HCT116 (cell line): ENCODE measurements at regions of chr15 and their contacts with region 1.

Region 1: DNA sequence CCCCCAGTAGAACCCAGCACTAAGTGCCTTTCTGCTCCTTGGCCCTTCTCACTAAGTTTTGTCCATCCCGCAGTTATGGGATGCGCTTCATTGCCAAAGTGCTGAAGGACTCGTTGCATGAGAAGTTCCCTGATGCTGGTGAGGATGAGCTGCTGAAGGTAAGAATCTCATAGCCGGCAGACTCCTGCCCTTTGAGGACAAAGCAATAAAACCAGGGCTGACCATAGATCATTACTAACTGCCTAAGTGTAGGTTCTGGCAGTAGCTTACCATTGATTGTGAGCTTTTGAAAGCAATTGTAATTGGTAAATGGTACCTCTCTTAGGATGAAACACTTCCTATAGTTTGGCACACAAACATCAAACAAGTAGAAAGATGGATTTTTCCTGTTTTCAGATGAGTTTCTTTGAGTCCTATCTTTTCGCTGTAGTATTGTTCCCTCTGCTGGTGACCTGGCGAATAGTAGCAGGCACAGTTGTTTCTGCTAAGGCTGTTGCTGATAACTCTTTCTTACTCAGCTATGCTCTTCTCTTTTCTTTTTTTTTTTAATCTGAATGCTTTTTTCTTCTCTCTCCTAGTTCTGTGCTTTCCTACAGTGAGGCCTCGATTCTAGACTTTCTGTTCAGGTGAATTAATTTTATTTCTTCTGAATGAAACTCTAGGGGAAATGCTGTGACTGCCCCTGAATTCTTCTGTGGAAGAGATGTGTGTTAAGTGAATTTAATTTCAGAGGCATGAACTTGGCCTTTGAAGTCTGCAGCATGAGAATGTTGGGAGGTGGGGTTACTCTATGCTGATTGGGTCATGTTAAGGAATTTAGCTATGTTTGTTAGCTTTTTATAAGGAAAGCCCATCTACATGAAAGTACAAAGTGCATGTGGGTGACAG is 47.4 kb upstream of the CRTC3 start:
- DNase-seq: peak; percentile 34
- ATAC-seq: peak; percentile 55; the same call in 1 of the 2 replicates
- H3K4me3 ChIP-seq: no peak overlapping the region
- H3K27ac ChIP-seq: no peak overlapping the region
- H3K4me1 ChIP-seq: peaks cover 22 to 28% of the 10 kb centered on the region in 2 experiments
- H3K27me3 ChIP-seq: no peaks in the 10 kb centered on the region
- CTCF ChIP-seq: peak; percentile 76 to 88 (median 85)
- POLR2A ChIP-seq: no peak
- RAD21 ChIP-seq: peak; percentile 94

Region 2: GRCh38 chr15:90291679-90292356 is 190.6 kb before region 1 on chr15:
- CTCF ChIA-PET with region 1: interaction called, 8 read pairs
- POLR2A ChIA-PET with region 1: no interaction called
- RAD21 ChIA-PET with region 1: interaction called in 1 of 2 experiments, 3 read pairs
- intact Hi-C with region 1: loop called (anchors 1 kb)
- DNase-seq: peak; percentile 71
- ATAC-seq: peak; percentile 58
- H3K4me3 ChIP-seq: no peak overlapping the region
- H3K27ac ChIP-seq: no peak overlapping the region
- H3K4me1 ChIP-seq: peaks cover 7 to 24% of the 10 kb centered on the region in 2 experiments; a peak in 3 of 4 replicates
- H3K27me3 ChIP-seq: no peaks in the 10 kb centered on the region
- CTCF ChIP-seq: no peak
- POLR2A ChIP-seq: no peak
- RAD21 ChIP-seq: no peak

Region 3: DNA sequence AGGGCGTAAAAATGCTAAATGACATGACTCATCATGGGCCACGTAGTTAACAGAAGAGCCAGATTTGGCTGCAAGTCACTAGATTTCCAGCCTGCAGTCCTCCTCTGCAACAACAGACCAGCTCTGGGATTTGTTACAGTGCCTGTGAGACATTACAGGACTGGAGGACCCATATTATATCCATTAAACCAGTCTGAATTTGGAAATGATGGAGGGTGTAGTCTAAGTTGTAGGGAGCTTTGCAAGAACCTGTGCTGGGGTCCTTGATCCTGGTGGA is 119.5 kb before region 1 on chr15:
- CTCF ChIA-PET with region 1: interaction called, 22 read pairs
- POLR2A ChIA-PET with region 1: no interaction called
- RAD21 ChIA-PET with region 1: interaction called, 6 to 11 read pairs
- intact Hi-C with region 1: loop called (anchors 1 kb)
- DNase-seq: no peak
- ATAC-seq: no peak
- H3K4me3 ChIP-seq: no peak overlapping the region
- H3K27ac ChIP-seq: no peak overlapping the region
- H3K4me1 ChIP-seq: peaks cover 8 to 32% of the 10 kb centered on the region in 2 experiments
- H3K27me3 ChIP-seq: no peaks in the 10 kb centered on the region
- CTCF ChIP-seq: no peak
- POLR2A ChIP-seq: no peak
- RAD21 ChIP-seq: no peak

Region 4: DNA sequence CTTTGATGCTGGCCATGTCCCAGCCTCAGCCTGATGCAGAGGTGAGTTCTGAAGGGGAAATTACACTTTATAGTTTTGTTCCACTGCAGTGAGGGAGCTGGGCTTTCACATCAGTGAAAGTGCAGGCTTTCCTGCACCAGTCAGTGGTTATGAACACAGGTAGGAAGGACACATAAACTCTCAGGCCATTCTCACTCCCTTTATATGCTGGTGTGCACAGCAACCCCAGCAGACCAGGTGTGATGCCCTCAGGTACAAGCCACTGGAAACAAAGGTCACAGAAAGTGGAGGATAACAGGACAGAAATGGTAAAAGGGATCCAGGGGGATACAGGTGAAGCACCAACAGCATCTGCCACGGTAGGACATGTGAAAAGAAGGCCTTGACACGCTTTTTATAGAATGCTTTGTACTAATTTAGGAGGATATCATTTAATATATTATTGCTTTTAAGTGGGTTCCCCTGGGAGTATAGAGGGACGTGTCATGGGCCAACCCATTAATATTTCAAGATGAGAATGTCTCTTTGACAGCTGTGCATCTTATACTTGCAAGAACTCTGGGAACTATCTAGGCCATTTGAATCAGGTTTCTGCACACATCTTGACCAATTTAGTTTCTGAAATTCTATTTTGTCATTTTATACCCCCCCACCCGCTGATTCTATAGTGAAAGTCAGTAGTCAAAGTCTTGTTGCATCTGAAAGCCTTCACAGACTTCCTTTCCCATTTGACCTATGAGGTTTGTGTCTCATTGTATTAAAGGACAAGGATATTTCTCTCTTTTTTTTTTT is 209.8 kb after region 1 on chr15:
- CTCF ChIA-PET with region 1: no interaction called
- POLR2A ChIA-PET with region 1: no interaction called
- RAD21 ChIA-PET with region 1: no interaction called
- intact Hi-C with region 1: loop called (anchors 10 kb)
- DNase-seq: no peak
- ATAC-seq: no peak
- H3K4me3 ChIP-seq: no peak overlapping the region
- H3K27ac ChIP-seq: no peak overlapping the region
- H3K4me1 ChIP-seq: 0 out of 4 replicates have a peak, but pooled peaks cover 0 to 3% of the 10 kb centered on the region in 2 experiments
- H3K27me3 ChIP-seq: no peaks in the 10 kb centered on the region
- CTCF ChIP-seq: no peak
- POLR2A ChIP-seq: no peak
- RAD21 ChIP-seq: no peak